SK-N-SH (cell line): ENCODE measurements at regions of chr10 and their contacts with region 1.

Region 1: GRCh38 chr10:59906417-59907202 is at the start of gene CCDC6:
- DNase-seq: peak; percentile 95
- H3K4me3 ChIP-seq: peak within 1 kb of the TSS; percentile 85 to 100
- H3K27ac ChIP-seq: peak within 1 kb of the TSS; percentile 76 to 89
- H3K4me1 ChIP-seq: peaks cover 9 to 10% of the 10 kb centered on the region in 2 experiments; a peak in 3 of 4 replicates
- H3K27me3 ChIP-seq: no peaks in the 10 kb centered on the region
- CTCF ChIP-seq: peak; percentile 63
- EP300 ChIP-seq: no peak
- RAD21 ChIP-seq: peak; percentile 51
- polyA plus RNA-seq, gene CCDC6: 10.8 and 12.7 TPM in 2 replicates

Region 2: GRCh38 chr10:59830601-59831259 is 75.9 kb before region 1 on chr10:
- CTCF ChIA-PET with region 1: interaction called, 17 read pairs
- POLR2A ChIA-PET with region 1: no interaction called
- DNase-seq: peak; percentile 59
- H3K4me3 ChIP-seq: no peak overlapping the region; a peak in 1 of 4 replicates
- H3K27ac ChIP-seq: no peak overlapping the region
- H3K4me1 ChIP-seq: no peaks in the 10 kb centered on the region; a peak in 1 of 4 replicates
- H3K27me3 ChIP-seq: no peaks in the 10 kb centered on the region
- CTCF ChIP-seq: peak; percentile 90
- EP300 ChIP-seq: no peak
- RAD21 ChIP-seq: peak; percentile 76

Region 3: GRCh38 chr10:59865101-59865500 is 41.5 kb before region 1 on chr10:
- CTCF ChIA-PET with region 1: interaction called, 22 read pairs
- POLR2A ChIA-PET with region 1: no interaction called
- DNase-seq: no peak
- H3K4me3 ChIP-seq: no peak overlapping the region
- H3K27ac ChIP-seq: no peak overlapping the region
- H3K4me1 ChIP-seq: no peaks in the 10 kb centered on the region; a peak in 1 of 4 replicates
- H3K27me3 ChIP-seq: no peaks in the 10 kb centered on the region
- CTCF ChIP-seq: peak; percentile 29
- EP300 ChIP-seq: no peak
- RAD21 ChIP-seq: peak; percentile 51

Region 4: GRCh38 chr10:59891349-59892335 is 15.0 kb before region 1 on chr10:
- CTCF ChIA-PET with region 1: interaction called, 10 read pairs
- POLR2A ChIA-PET with region 1: interaction called, 4 read pairs
- DNase-seq: no peak
- H3K4me3 ChIP-seq: no peak overlapping the region
- H3K27ac ChIP-seq: no peak overlapping the region
- H3K4me1 ChIP-seq: peaks cover 4 to 30% of the 10 kb centered on the region in 2 experiments; a peak in 2 of 4 replicates
- H3K27me3 ChIP-seq: no peaks in the 10 kb centered on the region
- CTCF ChIP-seq: no peak
- EP300 ChIP-seq: no peak
- RAD21 ChIP-seq: no peak